Endothelial cell of umbilical vein (primary cell): ENCODE measurements at regions of chr4 and their contacts with region 1.

Region 1: GRCh38 chr4:53929955-53930798 is 134.2 kb downstream of the CHIC2 start:
- DNase-seq: peak; percentile 88
- H3K4me3 ChIP-seq: no peak overlapping the region
- H3K27ac ChIP-seq: no peak overlapping the region
- H3K4me1 ChIP-seq: peaks cover 4% of the 10 kb centered on the region
- H3K27me3 ChIP-seq: peaks cover 0 to 3% of the 10 kb centered on the region in 2 experiments
- CTCF ChIP-seq: peak; percentile 71 to 79
- POLR2A ChIP-seq: no peak

Region 2: GRCh38 chr4:53861856-53862610 is 68.1 kb before region 1 on chr4:
- CTCF ChIA-PET with region 1: no interaction called
- POLR2A ChIA-PET with region 1: no interaction called
- dilution Hi-C with region 1: no loop called
- intact Hi-C with region 1: no loop called
- DNase-seq: no peak
- H3K4me3 ChIP-seq: no peak overlapping the region
- H3K27ac ChIP-seq: no peak overlapping the region
- H3K4me1 ChIP-seq: no peaks in the 10 kb centered on the region
- H3K27me3 ChIP-seq: peaks cover 2 to 12% of the 10 kb centered on the region in 2 experiments
- CTCF ChIP-seq: no peak
- POLR2A ChIP-seq: no peak

Region 3: GRCh38 chr4:53908661-53909078 is 21.5 kb before region 1 on chr4:
- CTCF ChIA-PET with region 1: interaction called, 34 read pairs
- POLR2A ChIA-PET with region 1: no interaction called
- dilution Hi-C with region 1: no loop called
- intact Hi-C with region 1: loop called (anchors 1 kb)
- DNase-seq: peak; percentile 87
- H3K4me3 ChIP-seq: no peak overlapping the region
- H3K27ac ChIP-seq: no peak overlapping the region
- H3K4me1 ChIP-seq: peaks cover 3% of the 10 kb centered on the region
- H3K27me3 ChIP-seq: peaks cover 26% of the 10 kb centered on the region in 2 experiments
- CTCF ChIP-seq: peak; percentile 77 to 85
- POLR2A ChIP-seq: no peak

Region 4: DNA sequence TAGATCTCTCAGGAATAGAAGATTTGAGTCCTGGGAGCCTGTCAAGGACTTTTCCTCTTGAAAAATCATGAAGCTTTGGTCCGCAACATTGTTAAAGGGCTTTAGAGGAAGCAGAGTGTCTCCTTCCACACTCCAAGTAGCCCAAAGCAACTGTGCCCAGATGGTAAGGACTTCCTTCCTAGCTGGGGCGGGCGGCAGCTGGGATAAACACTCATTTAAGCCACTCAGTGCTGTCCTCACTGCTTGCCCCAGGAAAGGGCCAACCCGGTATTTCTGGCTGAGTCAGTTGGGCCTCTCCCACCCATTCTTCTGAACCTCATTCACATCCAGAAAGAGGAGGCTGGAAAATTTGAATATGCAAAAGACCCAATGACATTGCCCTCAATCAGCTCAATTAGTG is 10.1 kb before region 1 on chr4:
- CTCF ChIA-PET with region 1: interaction called, 34 read pairs
- POLR2A ChIA-PET with region 1: no interaction called
- dilution Hi-C with region 1: no loop called
- intact Hi-C with region 1: no loop called
- DNase-seq: no peak
- H3K4me3 ChIP-seq: no peak overlapping the region
- H3K27ac ChIP-seq: no peak overlapping the region
- H3K4me1 ChIP-seq: peaks cover 26% of the 10 kb centered on the region
- H3K27me3 ChIP-seq: no peaks in the 10 kb centered on the region
- CTCF ChIP-seq: no peak
- POLR2A ChIP-seq: no peak

Region 5: GRCh38 chr4:54015423-54016030 is 85.3 kb after region 1 on chr4:
- CTCF ChIA-PET with region 1: interaction called, 13 read pairs
- POLR2A ChIA-PET with region 1: no interaction called
- dilution Hi-C with region 1: no loop called
- intact Hi-C with region 1: no loop called
- DNase-seq: no peak
- H3K4me3 ChIP-seq: no peak overlapping the region
- H3K27ac ChIP-seq: no peak overlapping the region
- H3K4me1 ChIP-seq: no peaks in the 10 kb centered on the region
- H3K27me3 ChIP-seq: no peaks in the 10 kb centered on the region
- CTCF ChIP-seq: no peak
- POLR2A ChIP-seq: no peak

Region 6: DNA sequence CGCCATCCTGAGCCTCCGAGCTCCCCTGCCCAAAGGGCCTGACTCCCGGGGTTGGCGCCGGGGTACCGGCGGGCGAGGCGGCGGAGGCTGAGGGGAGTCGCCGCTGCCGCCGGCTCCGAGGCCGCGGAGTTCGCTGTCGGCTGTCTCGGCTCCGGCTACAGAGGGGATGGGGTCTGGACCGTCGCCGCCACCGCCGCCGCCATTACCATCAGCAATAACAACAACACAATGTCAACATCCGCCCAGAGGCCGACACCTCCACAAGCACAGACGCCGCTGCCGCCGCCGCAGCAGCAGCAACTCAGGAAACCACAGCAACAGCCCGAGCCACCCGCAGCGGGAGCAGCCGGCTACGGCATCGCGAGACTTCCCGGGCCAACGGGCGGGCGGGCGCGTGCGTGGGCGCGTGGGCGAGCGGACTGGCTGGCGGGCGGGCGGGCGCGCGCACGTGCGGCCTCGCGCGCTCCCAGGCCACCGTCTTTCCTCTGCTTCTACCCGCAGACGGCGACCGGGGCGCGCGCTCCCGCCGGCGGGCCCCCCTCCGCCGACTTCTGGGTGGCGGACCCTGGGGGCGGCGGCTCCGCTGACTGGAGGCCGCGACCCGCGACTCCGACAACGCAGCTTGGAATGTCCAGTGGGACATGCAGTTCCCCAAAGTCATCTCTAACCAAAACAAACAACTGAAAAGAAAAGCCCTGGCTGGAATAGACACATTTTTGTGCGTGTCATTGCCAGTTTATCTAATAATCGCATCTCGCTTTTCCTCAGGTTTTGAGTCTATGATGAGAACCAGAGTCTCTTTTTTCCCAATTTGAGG is 134.3 kb after region 1 on chr4 and contains the start of gene CHIC2:
- CTCF ChIA-PET with region 1: interaction called, 21 read pairs
- POLR2A ChIA-PET with region 1: no interaction called
- dilution Hi-C with region 1: no loop called
- intact Hi-C with region 1: loop called (anchors 1 kb)
- DNase-seq: peak; percentile 94
- H3K4me3 ChIP-seq: peak within 1 kb of the TSS; percentile 55 to 98 (median 96)
- H3K27ac ChIP-seq: peak within 1 kb of the TSS; percentile 96
- H3K4me1 ChIP-seq: peaks cover 66% of the 10 kb centered on the region
- H3K27me3 ChIP-seq: no peaks in the 10 kb centered on the region
- CTCF ChIP-seq: no peak
- POLR2A ChIP-seq: peak; percentile 88
- total RNA-seq, gene CHIC2: 43.3 and 43.8 TPM in 2 replicates

Region 7: GRCh38 chr4:54099748-54100574 is 169.8 kb after region 1 on chr4 and contains the start of gene GSX2:
- CTCF ChIA-PET with region 1: interaction called, 10 read pairs
- POLR2A ChIA-PET with region 1: no interaction called
- dilution Hi-C with region 1: no loop called
- intact Hi-C with region 1: loop called (anchors 2 kb)
- DNase-seq: no peak
- H3K4me3 ChIP-seq: peak within 1 kb of the TSS in 2 of 3 experiments; percentile 22 to 26
- H3K27ac ChIP-seq: no peak within 1 kb of the TSS
- H3K4me1 ChIP-seq: peaks cover 25% of the 10 kb centered on the region
- H3K27me3 ChIP-seq: peaks cover 75 to 95% of the 10 kb centered on the region in 2 experiments
- CTCF ChIP-seq: no peak
- POLR2A ChIP-seq: no peak
- total RNA-seq, gene GSX2: not detected in 2 replicates

Region 8: GRCh38 chr4:54127660-54128059 is 197.5 kb after region 1 on chr4:
- CTCF ChIA-PET with region 1: no interaction called
- POLR2A ChIA-PET with region 1: no interaction called
- dilution Hi-C with region 1: no loop called
- intact Hi-C with region 1: no loop called
- DNase-seq: no peak
- H3K4me3 ChIP-seq: no peak overlapping the region
- H3K27ac ChIP-seq: no peak overlapping the region
- H3K4me1 ChIP-seq: no peaks in the 10 kb centered on the region
- H3K27me3 ChIP-seq: no peaks in the 10 kb centered on the region
- CTCF ChIP-seq: no peak
- POLR2A ChIP-seq: no peak

Region 9: GRCh38 chr4:54228056-54228527 is 297.9 kb after region 1 on chr4:
- CTCF ChIA-PET with region 1: interaction called, 84 read pairs
- POLR2A ChIA-PET with region 1: no interaction called
- dilution Hi-C with region 1: loop called (anchors 25 kb)
- intact Hi-C with region 1: loop called (anchors 2 kb)
- DNase-seq: no peak
- H3K4me3 ChIP-seq: peak overlapping the region; percentile 15 to 52 (median 19)
- H3K27ac ChIP-seq: no peak overlapping the region
- H3K4me1 ChIP-seq: peaks cover 41% of the 10 kb centered on the region
- H3K27me3 ChIP-seq: peaks cover 65 to 78% of the 10 kb centered on the region in 2 experiments
- CTCF ChIP-seq: peak; percentile 72 to 88
- POLR2A ChIP-seq: no peak